Adrenal gland (tissue), 19 donors: ENCODE measurements at regions of chr1 and their contacts with region 1.

Region 1: DNA sequence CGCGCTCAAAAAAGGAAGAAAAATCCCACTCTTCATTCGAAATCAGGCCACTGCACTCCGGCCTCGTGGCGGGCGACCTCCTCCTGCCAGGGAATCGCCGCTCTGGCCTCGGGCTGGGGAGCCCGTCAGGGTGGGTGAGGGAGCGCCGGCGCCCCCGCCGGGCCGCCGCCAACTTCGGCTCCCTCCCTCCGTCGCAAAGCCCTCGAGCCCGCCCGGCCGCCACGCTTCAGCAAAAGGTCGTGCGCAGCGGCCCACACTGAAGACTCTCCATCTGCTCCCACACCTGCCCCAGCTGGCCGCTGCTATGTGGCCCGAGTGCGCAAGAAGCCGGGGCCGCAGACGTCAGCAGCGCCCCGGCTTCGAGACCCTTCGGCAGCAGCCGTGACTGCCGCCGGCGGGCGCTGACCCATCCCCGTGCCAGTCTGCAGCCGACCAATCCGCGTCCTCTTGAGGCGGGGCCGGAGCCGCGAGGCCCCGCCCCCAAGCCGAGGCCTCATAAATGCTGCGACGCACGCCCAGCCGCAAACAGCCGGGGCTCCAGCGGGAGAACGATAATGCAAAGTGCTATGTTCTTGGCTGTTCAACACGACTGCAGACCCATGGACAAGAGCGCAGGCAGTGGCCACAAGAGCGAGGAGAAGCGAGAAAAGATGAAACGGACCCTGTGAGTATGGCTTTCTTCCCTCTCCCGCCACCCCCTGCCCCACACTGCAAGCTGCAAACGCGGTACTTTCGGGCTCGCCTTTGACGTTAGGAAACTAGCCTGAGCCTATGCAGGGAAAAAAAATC is at the start of gene RGS2:
- DNase-seq: peak; percentile 94 to 97 (median 95)
- H3K4me3 ChIP-seq: peak within 1 kb of the TSS; percentile 17 to 95 (median 69)
- H3K27ac ChIP-seq: peak within 1 kb of the TSS; percentile 81 to 97 (median 91)
- H3K4me1 ChIP-seq: peaks cover 9 to 35% of the 10 kb centered on the region in 2 donors
- H3K27me3 ChIP-seq: no peaks in the 10 kb centered on the region
- CTCF ChIP-seq: peak in 1 of 6 experiments; percentile 10
- POLR2A ChIP-seq: peak; percentile 100
- total RNA-seq, gene RGS2: 96.9 to 366 (median 138) TPM

Region 2: DNA sequence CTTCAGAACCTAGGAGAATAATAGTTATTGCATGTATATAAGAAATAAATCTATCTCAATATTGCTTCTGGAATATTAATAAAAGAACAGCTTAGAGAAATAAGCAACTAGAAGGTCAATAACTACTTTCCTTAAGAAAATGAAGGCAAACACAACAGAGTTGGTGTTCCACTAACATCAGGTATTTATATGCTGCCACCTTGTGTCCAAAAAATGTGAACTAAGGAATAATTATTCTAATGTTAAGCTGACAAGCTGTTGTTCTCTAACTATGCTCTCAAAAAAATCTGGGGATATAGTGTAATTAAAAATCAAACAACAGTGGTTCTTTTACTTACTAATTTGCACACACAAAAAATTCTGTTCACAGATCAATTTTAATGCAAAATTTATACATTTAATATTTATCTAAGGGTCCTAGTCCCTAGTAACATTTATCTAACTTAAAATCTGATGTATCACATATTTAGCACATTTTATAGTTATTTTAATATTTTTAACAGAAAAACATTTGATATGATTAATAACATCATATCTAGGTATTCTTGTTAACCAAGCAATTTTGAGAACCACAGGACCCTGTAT is 210.8 kb after region 1 on chr1:
- intact Hi-C with region 1: loop called (anchors 10 kb)
- DNase-seq: peak in 1 of 7 donors; percentile 7
- H3K4me3 ChIP-seq: no peak overlapping the region
- H3K27ac ChIP-seq: no peak overlapping the region
- H3K4me1 ChIP-seq: peaks cover 0 to 4% of the 10 kb centered on the region in 2 donors
- H3K27me3 ChIP-seq: no peaks in the 10 kb centered on the region
- CTCF ChIP-seq: peak; percentile 36 to 78 (median 67)
- POLR2A ChIP-seq: no peak